ENCODE measurements at regions of chr11 and their contacts with region 1.

Region 1: GRCh38 chr11:122101625-122102291 is 14.3 kb downstream of the BLID start:
- DNase-seq: no peak
- H3K4me3 ChIP-seq: peak overlapping the region; percentile 63 to 69 (median 63)
- H3K27ac ChIP-seq: peak overlapping the region; percentile 88 to 93 (median 92)
- H3K4me1 ChIP-seq: peaks cover 7 to 28% (median 26%) of the 10 kb centered on the region in 4 donors
- H3K27me3 ChIP-seq: no peaks in the 10 kb centered on the region
- CTCF ChIP-seq: peak; percentile 67 to 78 (median 74)
- EP300 ChIP-seq: no peak
- POLR2A ChIP-seq: no peak

Region 2: GRCh38 chr11:121655537-121656327 is 446.0 kb before region 1 on chr11:
- intact Hi-C with region 1: loop called (anchors 1 kb)
- DNase-seq: peak; percentile 96
- H3K4me3 ChIP-seq: peak overlapping the region; percentile 47 to 61 (median 51)
- H3K27ac ChIP-seq: peak overlapping the region; percentile 86 to 92 (median 88)
- H3K4me1 ChIP-seq: peaks cover 10 to 34% (median 31%) of the 10 kb centered on the region in 4 donors
- H3K27me3 ChIP-seq: no peaks in the 10 kb centered on the region
- CTCF ChIP-seq: peak; percentile 80 to 93 (median 91)
- EP300 ChIP-seq: peak; percentile 36
- POLR2A ChIP-seq: no peak

Region 3: DNA sequence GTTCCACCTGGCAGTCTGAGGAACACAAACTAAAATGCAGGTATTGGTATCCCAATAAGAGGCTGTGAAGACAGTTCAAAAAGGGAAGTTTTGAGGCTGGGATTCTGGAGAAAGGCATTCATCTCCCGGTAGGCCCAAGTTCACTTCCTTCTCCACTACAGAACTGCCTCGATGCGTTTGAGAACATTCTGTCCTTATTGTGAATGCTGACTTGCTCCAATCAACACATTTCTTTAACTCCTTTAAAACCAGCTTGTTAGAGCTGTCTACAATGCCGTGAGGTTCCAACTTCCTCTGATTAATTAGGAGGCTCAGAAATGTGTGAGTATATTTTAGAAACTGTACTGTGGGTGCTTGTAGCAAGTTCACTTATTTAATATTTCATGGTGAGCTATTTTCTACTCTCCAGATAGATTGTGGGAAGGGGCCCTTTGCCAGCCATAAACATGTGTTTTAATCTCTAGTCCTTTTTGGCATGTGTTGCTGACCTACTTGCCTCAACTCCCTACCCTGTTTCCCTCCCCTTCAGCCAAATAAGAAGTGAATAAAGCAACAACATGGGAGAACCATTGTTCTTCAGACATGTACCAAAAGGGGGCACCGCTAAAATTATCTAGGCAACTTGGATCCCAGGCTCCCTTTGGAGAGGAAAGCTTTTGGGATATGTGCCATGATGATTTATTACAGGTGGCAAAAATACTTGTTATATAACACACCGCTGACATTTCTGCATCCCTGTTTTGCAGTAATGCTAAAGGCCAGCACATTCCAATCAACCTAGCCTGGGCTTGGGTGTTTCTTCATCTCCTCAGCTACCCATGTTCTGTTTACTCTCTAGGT is 231.3 kb before region 1 on chr11:
- intact Hi-C with region 1: loop called (anchors 1 kb)
- DNase-seq: peak; percentile 91
- H3K4me3 ChIP-seq: no peak overlapping the region
- H3K27ac ChIP-seq: peak overlapping the region; percentile 67 to 81 (median 80)
- H3K4me1 ChIP-seq: peaks cover 10 to 45% (median 39%) of the 10 kb centered on the region in 4 donors
- H3K27me3 ChIP-seq: no peaks in the 10 kb centered on the region
- CTCF ChIP-seq: peak in 1 of 3 experiments; percentile 30
- EP300 ChIP-seq: peak; percentile 59
- POLR2A ChIP-seq: no peak

Region 4: GRCh38 chr11:122020902-122021301 is 80.9 kb before region 1 on chr11:
- intact Hi-C with region 1: loop called (anchors 5 kb)
- DNase-seq: no peak
- H3K4me3 ChIP-seq: no peak overlapping the region
- H3K27ac ChIP-seq: no peak overlapping the region
- H3K4me1 ChIP-seq: peaks cover 0 to 3% (median 0%) of the 10 kb centered on the region in 4 donors
- H3K27me3 ChIP-seq: no peaks in the 10 kb centered on the region
- CTCF ChIP-seq: peak; percentile 39 to 53 (median 49)
- EP300 ChIP-seq: no peak
- POLR2A ChIP-seq: no peak

Region 5: GRCh38 chr11:122159173-122159721 is 57.5 kb after region 1 on chr11:
- intact Hi-C with region 1: loop called (anchors 5 kb)
- DNase-seq: no peak
- H3K4me3 ChIP-seq: peak overlapping the region; percentile 43 to 57 (median 53)
- H3K27ac ChIP-seq: peak overlapping the region; percentile 86 to 88 (median 87)
- H3K4me1 ChIP-seq: peaks cover 0 to 73% (median 65%) of the 10 kb centered on the region in 4 donors
- H3K27me3 ChIP-seq: no peaks in the 10 kb centered on the region
- CTCF ChIP-seq: no peak
- EP300 ChIP-seq: no peak
- POLR2A ChIP-seq: no peak

Measured in esophagus muscularis mucosa (tissue), 4 donors.